ENCODE measurements at regions of chr6 and their contacts with region 1.

Region 1: DNA sequence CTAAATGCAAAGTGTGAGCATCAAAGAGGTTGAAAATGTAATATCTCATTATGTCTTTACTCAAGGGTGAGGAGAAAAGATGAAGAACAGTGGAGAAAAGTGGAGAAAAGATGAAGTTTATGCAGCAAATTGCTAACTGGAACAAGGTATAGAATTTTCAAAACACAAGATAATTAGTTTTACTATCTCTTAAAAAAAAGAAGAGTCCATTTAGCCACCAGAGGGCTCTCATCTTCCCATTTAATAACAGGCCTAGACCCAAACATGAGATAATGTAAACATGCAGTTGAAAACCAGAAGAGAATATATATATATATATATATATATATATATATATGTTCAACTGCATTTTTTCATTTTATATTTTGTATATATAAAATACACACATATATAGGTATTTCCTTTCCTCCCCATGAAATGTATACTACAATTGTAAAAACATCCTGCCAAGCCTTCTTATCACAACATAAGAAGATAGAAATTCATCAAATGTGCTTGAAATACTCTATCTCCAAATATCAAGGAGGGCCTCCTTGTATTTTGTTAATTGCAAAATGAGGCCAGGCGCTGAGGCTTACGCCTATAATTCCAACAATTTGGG is 78.4 kb downstream of the ADTRP start:
- DNase-seq: peak; percentile 68
- H3K4me3 Mint-ChIP-seq: no peak overlapping the region
- H3K27ac Mint-ChIP-seq: no peak overlapping the region
- H3K4me1 Mint-ChIP-seq: peaks cover 25% of the 10 kb centered on the region
- H3K27me3 Mint-ChIP-seq: no peaks in the 10 kb centered on the region
- CTCF ChIP-seq: peak; percentile 37

Region 2: GRCh38 chr6:11921017-11921438 is 220.8 kb after region 1 on chr6:
- CTCF ChIA-PET with region 1: interaction called, 3 read pairs
- POLR2A ChIA-PET with region 1: no interaction called
- intact Hi-C with region 1: loop called (anchors 5 kb)
- DNase-seq: peak; percentile 86
- H3K4me3 Mint-ChIP-seq: no peak overlapping the region
- H3K27ac Mint-ChIP-seq: peak overlapping the region; percentile 76
- H3K4me1 Mint-ChIP-seq: peaks cover 17% of the 10 kb centered on the region
- H3K27me3 Mint-ChIP-seq: no peaks in the 10 kb centered on the region
- CTCF ChIP-seq: no peak

Region 3: GRCh38 chr6:12075067-12075563 is 374.9 kb after region 1 on chr6:
- CTCF ChIA-PET with region 1: interaction called, 3 read pairs
- POLR2A ChIA-PET with region 1: interaction called, 4 read pairs
- intact Hi-C with region 1: loop called (anchors 1 kb)
- DNase-seq: peak; percentile 20
- H3K4me3 Mint-ChIP-seq: no peak overlapping the region
- H3K27ac Mint-ChIP-seq: no peak overlapping the region
- H3K4me1 Mint-ChIP-seq: peaks cover 12% of the 10 kb centered on the region
- H3K27me3 Mint-ChIP-seq: no peaks in the 10 kb centered on the region
- CTCF ChIP-seq: peak; percentile 30

Measured in MCF 10A (cell line).